ENCODE measurements at regions of chr7 and their contacts with region 1.

Region 1: GRCh38 chr7:44123190-44124003 is at the start of gene POLD2:
- DNase-seq: peak; percentile 98
- H3K4me3 Mint-ChIP-seq: peak within 1 kb of the TSS; percentile 96
- H3K27ac Mint-ChIP-seq: peak within 1 kb of the TSS; percentile 90
- H3K4me1 Mint-ChIP-seq: peaks cover 31% of the 10 kb centered on the region
- H3K27me3 Mint-ChIP-seq: peaks cover 7% of the 10 kb centered on the region
- total RNA-seq, gene POLD2: 234 and 250 TPM in 2 replicates

Region 2: DNA sequence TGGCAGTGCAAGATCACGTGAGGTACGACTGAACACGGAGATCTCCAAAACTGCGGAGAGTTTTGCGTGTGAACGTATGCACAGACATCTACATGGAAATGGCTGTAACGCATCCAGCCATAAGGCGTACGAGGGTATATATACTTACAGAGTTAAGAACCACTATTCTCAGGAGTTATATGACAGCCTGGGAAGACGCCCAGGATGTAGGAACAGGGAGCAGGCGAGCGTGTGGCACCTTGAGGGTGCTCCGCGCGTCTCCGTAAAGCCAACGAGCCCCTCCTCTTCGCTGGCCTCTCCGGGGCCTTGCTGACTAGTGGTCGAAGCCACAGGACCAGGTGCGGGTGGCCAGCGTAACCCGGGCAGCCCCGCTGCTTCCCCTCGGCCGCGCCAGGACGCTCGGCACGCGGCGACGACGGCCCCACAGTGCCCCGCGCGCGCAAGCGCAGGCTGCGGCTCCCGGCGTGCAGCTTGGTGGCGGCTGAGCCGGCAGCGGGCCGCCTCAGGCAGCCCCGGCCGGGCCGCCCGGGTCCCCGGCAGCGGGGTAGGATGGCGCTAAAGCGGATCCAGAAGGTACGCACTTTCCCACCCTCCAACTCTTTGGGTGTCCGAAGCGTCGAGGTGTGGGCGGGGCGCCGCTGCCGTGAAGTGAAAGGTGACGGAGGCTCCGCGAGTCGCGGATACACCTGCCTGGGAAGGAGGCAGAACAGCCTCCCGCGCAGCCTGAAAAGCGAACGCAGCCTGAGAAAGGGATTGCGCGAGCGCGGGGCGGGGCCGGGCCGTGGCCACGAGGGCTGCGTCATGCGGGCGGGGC is 197.2 kb before region 1 on chr7 and contains the start of gene UBE2D4:
- intact Hi-C with region 1: loop called (anchors 1 kb)
- DNase-seq: peak; percentile 88
- H3K4me3 Mint-ChIP-seq: peak within 1 kb of the TSS; percentile 95
- H3K27ac Mint-ChIP-seq: peak within 1 kb of the TSS; percentile 97
- H3K4me1 Mint-ChIP-seq: peaks cover 30% of the 10 kb centered on the region
- H3K27me3 Mint-ChIP-seq: peaks cover 2% of the 10 kb centered on the region
- total RNA-seq, gene UBE2D4: 15.3 and 17.7 TPM in 2 replicates

Region 3: DNA sequence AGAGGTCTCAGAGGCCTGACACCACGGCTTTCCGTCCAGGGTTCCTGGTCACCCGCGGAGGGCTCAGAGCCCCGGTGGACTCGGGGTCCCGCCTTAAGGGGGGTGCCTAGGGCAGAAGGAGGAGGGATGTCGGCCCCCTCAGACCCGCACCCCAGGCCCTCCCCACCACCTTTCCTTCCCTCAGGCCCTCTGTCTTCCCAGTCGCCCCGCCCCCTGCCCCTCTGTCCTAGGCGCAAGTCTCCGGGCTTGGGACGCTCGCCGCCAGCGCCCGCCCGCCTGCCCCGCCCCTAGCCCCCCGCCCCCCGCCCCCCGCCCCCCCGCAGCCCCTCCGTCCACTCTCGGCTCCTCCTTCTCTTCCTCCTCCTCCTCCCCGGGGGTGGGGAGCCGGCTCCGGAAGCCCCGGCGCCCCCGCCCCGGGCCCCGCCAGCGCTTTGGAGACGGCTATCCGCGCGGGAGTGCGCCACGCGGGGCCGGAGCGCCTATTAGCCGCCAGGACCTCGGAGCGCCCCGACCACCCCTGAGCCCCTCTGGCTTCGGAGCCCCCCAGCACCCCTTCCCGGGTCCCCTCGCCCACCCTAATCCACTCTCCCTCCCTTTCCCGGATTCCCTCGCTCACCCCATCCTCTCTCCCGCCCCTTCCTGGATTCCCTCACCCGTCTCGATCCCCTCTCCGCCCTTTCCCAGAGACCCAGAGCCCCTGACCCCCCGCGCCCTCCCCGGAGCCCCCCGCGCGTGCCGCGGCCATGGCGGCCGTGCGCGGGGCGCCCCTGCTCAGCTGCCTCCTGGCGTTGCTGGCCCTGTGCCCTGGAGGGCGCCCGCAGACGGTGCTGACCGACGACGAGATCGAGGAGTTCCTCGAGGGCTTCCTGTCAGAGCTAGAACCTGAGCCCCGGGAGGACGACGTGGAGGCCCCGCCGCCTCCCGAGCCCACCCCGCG is 19.2 kb before region 1 on chr7 and contains the start of gene AEBP1:
- intact Hi-C with region 1: loop called (anchors 2 kb)
- DNase-seq: no peak
- H3K4me3 Mint-ChIP-seq: peak within 1 kb of the TSS; percentile 75
- H3K27ac Mint-ChIP-seq: no peak within 1 kb of the TSS
- H3K4me1 Mint-ChIP-seq: peaks cover 10% of the 10 kb centered on the region
- H3K27me3 Mint-ChIP-seq: peaks cover 20% of the 10 kb centered on the region
- total RNA-seq, gene AEBP1: 17.0 and 17.2 TPM in 2 replicates

Region 4: DNA sequence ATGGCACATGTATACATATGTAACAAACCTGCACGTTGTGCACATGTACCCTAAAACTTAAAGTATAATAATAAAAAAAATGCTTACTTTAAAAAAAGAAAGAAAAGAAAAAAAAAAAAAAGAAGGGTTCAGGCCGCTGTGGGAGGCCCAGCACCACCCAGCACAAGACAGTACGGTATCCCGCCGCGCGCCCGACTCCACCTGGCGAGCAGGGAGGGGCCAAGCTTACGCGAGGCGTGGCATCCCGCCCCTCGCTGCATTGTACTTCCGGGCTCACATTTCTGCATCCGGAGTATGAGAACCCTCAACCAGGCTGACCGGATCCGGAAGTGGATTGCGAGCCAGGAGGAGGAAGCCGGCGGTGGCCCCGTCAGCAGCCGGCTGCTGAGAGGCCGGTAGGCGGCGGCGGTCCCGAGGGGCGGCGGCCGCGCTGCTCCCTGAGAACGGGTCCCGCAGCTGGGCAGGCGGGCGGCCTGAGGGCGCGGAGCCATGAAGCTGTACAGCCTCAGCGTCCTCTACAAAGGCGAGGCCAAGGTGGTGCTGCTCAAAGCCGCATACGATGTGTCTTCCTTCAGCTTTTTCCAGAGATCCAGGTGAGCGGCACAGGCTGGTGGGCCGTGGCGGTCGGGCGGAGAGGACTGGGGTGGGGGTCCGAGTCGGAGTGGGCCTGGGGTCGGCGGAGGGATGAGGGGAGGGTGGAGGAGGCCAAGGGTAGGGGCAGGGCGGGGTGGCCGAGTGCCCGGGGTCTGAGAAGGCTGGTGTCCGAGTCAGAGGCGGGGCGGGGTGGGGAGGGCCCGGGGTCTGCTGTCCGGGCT is 77.5 kb after region 1 on chr7 and contains the start of gene YKT6:
- intact Hi-C with region 1: loop called (anchors 1 kb)
- DNase-seq: peak; percentile 94
- H3K4me3 Mint-ChIP-seq: peak within 1 kb of the TSS; percentile 88
- H3K27ac Mint-ChIP-seq: peak within 1 kb of the TSS; percentile 52
- H3K4me1 Mint-ChIP-seq: peaks cover 37% of the 10 kb centered on the region
- H3K27me3 Mint-ChIP-seq: no peaks in the 10 kb centered on the region
- total RNA-seq, gene YKT6: 91.8 and 92.1 TPM in 2 replicates

Region 5: DNA sequence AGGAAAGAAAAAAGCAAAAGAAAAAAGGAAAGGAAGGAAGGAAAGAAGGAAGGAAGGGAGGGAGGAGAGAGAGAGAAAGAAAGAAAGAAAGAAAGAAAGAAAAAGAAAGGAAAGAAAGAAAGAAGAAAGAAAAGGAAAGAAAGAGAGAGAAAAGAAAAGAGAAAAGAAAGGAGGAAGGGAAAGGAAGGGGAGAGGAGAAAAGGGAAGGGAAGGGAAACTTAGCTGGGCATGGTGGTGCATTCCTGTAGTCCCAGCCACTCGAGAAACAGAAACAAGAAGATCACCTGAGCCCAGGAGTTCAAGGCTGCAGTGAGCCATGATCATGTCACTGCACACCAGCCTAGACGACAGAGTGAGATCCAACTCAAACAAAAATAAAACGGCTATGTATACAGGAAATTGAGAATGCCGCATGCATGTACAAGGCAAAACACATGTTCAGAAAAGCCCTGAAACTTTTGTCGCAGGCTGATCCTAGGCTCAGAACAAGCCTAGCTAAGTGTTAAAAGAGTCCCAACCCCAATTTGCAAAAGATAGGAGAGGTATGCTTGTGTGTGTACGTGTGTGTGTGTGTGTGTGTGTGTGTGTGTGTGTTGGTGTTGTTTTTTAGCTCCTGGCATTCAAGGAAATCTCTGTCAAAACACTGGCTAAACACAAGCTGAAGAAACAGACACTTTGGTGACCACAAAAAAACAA is 424.3 kb after region 1 on chr7:
- intact Hi-C with region 1: no loop called
- DNase-seq: no peak
- H3K4me3 Mint-ChIP-seq: no peak overlapping the region
- H3K27ac Mint-ChIP-seq: no peak overlapping the region
- H3K4me1 Mint-ChIP-seq: peaks cover 7% of the 10 kb centered on the region
- H3K27me3 Mint-ChIP-seq: peaks cover 20% of the 10 kb centered on the region

Region 6: GRCh38 chr7:44581879-44582603 is 458.6 kb after region 1 on chr7 and contains the start of gene TMED4:
- intact Hi-C with region 1: loop called (anchors 2 kb)
- DNase-seq: peak; percentile 100
- H3K4me3 Mint-ChIP-seq: peak within 1 kb of the TSS; percentile 93
- H3K27ac Mint-ChIP-seq: peak within 1 kb of the TSS; percentile 93
- H3K4me1 Mint-ChIP-seq: peaks cover 33% of the 10 kb centered on the region
- H3K27me3 Mint-ChIP-seq: no peaks in the 10 kb centered on the region
- total RNA-seq, gene TMED4: 74.9 and 79.6 TPM in 2 replicates

Measured in activated T-helper 1 cell treated with anti-CD3 and anti-CD28 coated beads, Interleukin-12 subunit alpha, Interleukin-12 subunit beta, Interleukin-2, Interleukin-4 antibody, amounts not matched to agents 30 ng/mL and 10 ng/mL and 1 ng/mL, durations not matched to agents 14 hours and 24 hours and 36 hours (primary cell).